ENCODE measurements at regions of chr12 and their contacts with region 1.

Region 1: GRCh38 chr12:15590180-15590826 is 198.9 kb downstream of the EPS8 start:
- DNase-seq: peak; percentile 80
- H3K27ac ChIP-seq: no peak overlapping the region
- CTCF ChIP-seq: peak; percentile 80

Region 2: DNA sequence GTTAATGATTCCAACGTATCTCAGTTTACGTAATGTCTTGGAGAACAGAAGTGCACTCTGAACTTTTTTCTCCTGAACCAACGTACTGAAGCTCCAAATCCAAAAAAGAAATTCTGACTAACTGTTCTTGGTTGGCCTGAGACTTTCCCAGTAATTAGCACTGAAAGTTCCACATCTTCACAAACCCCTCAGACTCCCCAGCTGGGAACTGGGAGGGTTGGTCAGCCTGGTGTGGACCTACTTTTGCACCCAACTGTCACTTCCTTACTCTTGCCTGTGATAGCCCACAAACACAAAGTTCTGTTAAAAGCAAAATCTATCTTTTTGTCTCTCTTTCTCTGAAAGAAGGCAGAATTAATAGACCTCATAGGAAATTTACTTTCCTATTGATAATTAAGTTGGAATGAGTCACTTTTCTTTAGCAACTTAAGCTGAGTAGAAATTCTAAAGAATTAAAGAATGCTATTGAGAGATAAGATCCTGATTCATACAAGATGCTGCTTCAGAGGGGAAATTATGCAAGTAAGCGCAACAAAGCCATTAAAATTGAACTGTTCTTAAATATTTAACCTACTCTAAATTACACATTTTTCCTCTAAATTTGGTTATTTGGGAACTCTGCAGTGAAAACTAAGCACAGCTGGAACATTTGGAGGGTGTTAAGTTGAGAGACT is 43.8 kb after region 1 on chr12:
- CTCF ChIA-PET with region 1: no interaction called
- POLR2A ChIA-PET with region 1: no interaction called
- DNase-seq: no peak
- H3K27ac ChIP-seq: no peak overlapping the region
- CTCF ChIP-seq: no peak

Region 3: GRCh38 chr12:15662303-15662980 is 72.1 kb after region 1 on chr12:
- CTCF ChIA-PET with region 1: no interaction called
- POLR2A ChIA-PET with region 1: no interaction called
- DNase-seq: peak; percentile 86
- H3K27ac ChIP-seq: no peak overlapping the region
- CTCF ChIP-seq: no peak

Region 4: DNA sequence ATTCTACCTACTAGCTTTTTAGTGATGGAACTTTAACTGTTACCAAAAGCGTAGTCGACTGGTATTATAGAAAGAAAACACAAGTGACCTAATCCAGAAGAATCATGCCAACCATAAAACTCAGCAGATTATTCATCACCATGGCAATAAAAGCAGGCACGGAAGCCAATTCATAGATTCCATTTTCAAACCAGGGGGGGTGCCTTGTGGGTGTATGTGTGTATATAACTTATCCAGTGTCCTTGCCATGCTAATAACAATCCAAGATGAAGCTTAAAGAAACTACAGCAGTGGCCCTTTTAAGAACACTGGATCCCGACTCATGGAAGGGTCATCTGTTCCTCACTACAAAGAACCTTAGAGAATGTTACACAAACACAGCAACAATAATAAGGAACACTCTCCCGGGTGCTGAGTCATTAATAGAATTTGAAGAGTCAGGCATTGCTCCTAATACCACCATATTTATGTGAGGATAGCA is 137.9 kb after region 1 on chr12:
- CTCF ChIA-PET with region 1: no interaction called
- POLR2A ChIA-PET with region 1: no interaction called
- DNase-seq: no peak
- H3K27ac ChIP-seq: no peak overlapping the region
- CTCF ChIP-seq: no peak

Region 5: GRCh38 chr12:15856097-15856982 is 266.0 kb after region 1 on chr12:
- CTCF ChIA-PET with region 1: interaction called, 17 read pairs
- POLR2A ChIA-PET with region 1: no interaction called
- DNase-seq: peak; percentile 32
- H3K27ac ChIP-seq: no peak overlapping the region
- CTCF ChIP-seq: peak; percentile 59

Measured in RWPE1 (cell line).